B cell (primary cell): ENCODE measurements at regions of chr6 and their contacts with region 1.

Region 1: GRCh38 chr6:13487122-13488014 is at the start of gene GFOD1:
- DNase-seq: peak; percentile 89
- ATAC-seq: peak; percentile 81
- H3K4me3 ChIP-seq: peak within 1 kb of the TSS; percentile 51 to 73 (median 66)
- H3K4me3 Mint-ChIP-seq: peak within 1 kb of the TSS; percentile 95
- H3K27ac ChIP-seq: peak within 1 kb of the TSS; percentile 57 to 60
- H3K27ac Mint-ChIP-seq: peak within 1 kb of the TSS; percentile 97
- H3K4me1 ChIP-seq: peaks cover 19 to 38% of the 10 kb centered on the region in 2 donors
- H3K4me1 Mint-ChIP-seq: peaks cover 42% of the 10 kb centered on the region
- H3K27me3 ChIP-seq: no peaks in the 10 kb centered on the region
- H3K27me3 Mint-ChIP-seq: no peaks in the 10 kb centered on the region
- CTCF ChIP-seq: no peak
- total RNA-seq, gene GFOD1: 42.4 and 44.6 TPM in 2 replicates

Region 2: GRCh38 chr6:11537229-11538051 is 1949.9 kb before region 1 on chr6 and contains the start of gene TMEM170B:
- CTCF ChIA-PET with region 1: no interaction called
- POLR2A ChIA-PET with region 1: no interaction called
- intact Hi-C with region 1: loop called (anchors 5 kb)
- DNase-seq: peak; percentile 99
- ATAC-seq: peak; percentile 93
- H3K4me3 ChIP-seq: peak within 1 kb of the TSS; percentile 68 to 83 (median 80)
- H3K4me3 Mint-ChIP-seq: peak within 1 kb of the TSS; percentile 87
- H3K27ac ChIP-seq: peak within 1 kb of the TSS; percentile 19 to 83
- H3K27ac Mint-ChIP-seq: peak within 1 kb of the TSS; percentile 92
- H3K4me1 ChIP-seq: peaks cover 8 to 11% of the 10 kb centered on the region in 2 donors
- H3K4me1 Mint-ChIP-seq: peaks cover 16% of the 10 kb centered on the region
- H3K27me3 ChIP-seq: no peaks in the 10 kb centered on the region
- H3K27me3 Mint-ChIP-seq: peaks cover 8% of the 10 kb centered on the region
- CTCF ChIP-seq: no peak
- total RNA-seq, gene TMEM170B: 3.2 and 3.4 TPM in 2 replicates

Region 3: GRCh38 chr6:13053006-13053461 is 434.3 kb before region 1 on chr6:
- CTCF ChIA-PET with region 1: no interaction called
- POLR2A ChIA-PET with region 1: no interaction called
- intact Hi-C with region 1: no loop called
- DNase-seq: no peak
- ATAC-seq: no peak
- H3K4me3 ChIP-seq: no peak overlapping the region
- H3K4me3 Mint-ChIP-seq: no peak overlapping the region
- H3K27ac ChIP-seq: no peak overlapping the region
- H3K27ac Mint-ChIP-seq: no peak overlapping the region
- H3K4me1 ChIP-seq: no peaks in the 10 kb centered on the region
- H3K4me1 Mint-ChIP-seq: no peaks in the 10 kb centered on the region
- H3K27me3 ChIP-seq: no peaks in the 10 kb centered on the region
- H3K27me3 Mint-ChIP-seq: peaks cover 50% of the 10 kb centered on the region
- CTCF ChIP-seq: no peak

Region 4: GRCh38 chr6:13383328-13384163 is 103.8 kb before region 1 on chr6:
- CTCF ChIA-PET with region 1: interaction called, 21 read pairs
- POLR2A ChIA-PET with region 1: interaction called, 4 read pairs
- intact Hi-C with region 1: loop called (anchors 2 kb)
- DNase-seq: peak; percentile 83
- ATAC-seq: peak; percentile 96
- H3K4me3 ChIP-seq: no peak overlapping the region
- H3K4me3 Mint-ChIP-seq: peak overlapping the region; percentile 55
- H3K27ac ChIP-seq: peak overlapping the region; percentile 70 to 84
- H3K27ac Mint-ChIP-seq: peak overlapping the region; percentile 92
- H3K4me1 ChIP-seq: peaks cover 36 to 42% of the 10 kb centered on the region in 2 donors
- H3K4me1 Mint-ChIP-seq: peaks cover 73% of the 10 kb centered on the region
- H3K27me3 ChIP-seq: no peaks in the 10 kb centered on the region
- H3K27me3 Mint-ChIP-seq: no peaks in the 10 kb centered on the region
- CTCF ChIP-seq: peak; percentile 53

Region 5: GRCh38 chr6:13454286-13455221 is 32.8 kb before region 1 on chr6:
- CTCF ChIA-PET with region 1: interaction called, 9 read pairs
- POLR2A ChIA-PET with region 1: interaction called, 3 read pairs
- intact Hi-C with region 1: loop called (anchors 1 kb)
- DNase-seq: peak; percentile 75
- ATAC-seq: peak; percentile 77
- H3K4me3 ChIP-seq: peak overlapping the region in 3 of 5 experiments; percentile 7 to 26 (median 12)
- H3K4me3 Mint-ChIP-seq: peak overlapping the region; percentile 76
- H3K27ac ChIP-seq: peak overlapping the region; percentile 23 to 50
- H3K27ac Mint-ChIP-seq: peak overlapping the region; percentile 88
- H3K4me1 ChIP-seq: peaks cover 36 to 41% of the 10 kb centered on the region in 2 donors
- H3K4me1 Mint-ChIP-seq: peaks cover 56% of the 10 kb centered on the region
- H3K27me3 ChIP-seq: no peaks in the 10 kb centered on the region
- H3K27me3 Mint-ChIP-seq: no peaks in the 10 kb centered on the region
- CTCF ChIP-seq: peak; percentile 17

Region 6: GRCh38 chr6:13526727-13527670 is 39.6 kb after region 1 on chr6:
- CTCF ChIA-PET with region 1: interaction called, 7 read pairs
- POLR2A ChIA-PET with region 1: interaction called, 6 read pairs
- intact Hi-C with region 1: loop called (anchors 1 kb)
- DNase-seq: peak; percentile 86
- ATAC-seq: peak; percentile 88
- H3K4me3 ChIP-seq: peak overlapping the region in 3 of 5 experiments; percentile 0 to 33 (median 11)
- H3K4me3 Mint-ChIP-seq: peak overlapping the region; percentile 40
- H3K27ac ChIP-seq: peak overlapping the region; percentile 76 to 89
- H3K27ac Mint-ChIP-seq: peak overlapping the region; percentile 88
- H3K4me1 ChIP-seq: peaks cover 38 to 41% of the 10 kb centered on the region in 2 donors
- H3K4me1 Mint-ChIP-seq: peaks cover 47% of the 10 kb centered on the region
- H3K27me3 ChIP-seq: no peaks in the 10 kb centered on the region
- H3K27me3 Mint-ChIP-seq: no peaks in the 10 kb centered on the region
- CTCF ChIP-seq: peak; percentile 33

Region 7: DNA sequence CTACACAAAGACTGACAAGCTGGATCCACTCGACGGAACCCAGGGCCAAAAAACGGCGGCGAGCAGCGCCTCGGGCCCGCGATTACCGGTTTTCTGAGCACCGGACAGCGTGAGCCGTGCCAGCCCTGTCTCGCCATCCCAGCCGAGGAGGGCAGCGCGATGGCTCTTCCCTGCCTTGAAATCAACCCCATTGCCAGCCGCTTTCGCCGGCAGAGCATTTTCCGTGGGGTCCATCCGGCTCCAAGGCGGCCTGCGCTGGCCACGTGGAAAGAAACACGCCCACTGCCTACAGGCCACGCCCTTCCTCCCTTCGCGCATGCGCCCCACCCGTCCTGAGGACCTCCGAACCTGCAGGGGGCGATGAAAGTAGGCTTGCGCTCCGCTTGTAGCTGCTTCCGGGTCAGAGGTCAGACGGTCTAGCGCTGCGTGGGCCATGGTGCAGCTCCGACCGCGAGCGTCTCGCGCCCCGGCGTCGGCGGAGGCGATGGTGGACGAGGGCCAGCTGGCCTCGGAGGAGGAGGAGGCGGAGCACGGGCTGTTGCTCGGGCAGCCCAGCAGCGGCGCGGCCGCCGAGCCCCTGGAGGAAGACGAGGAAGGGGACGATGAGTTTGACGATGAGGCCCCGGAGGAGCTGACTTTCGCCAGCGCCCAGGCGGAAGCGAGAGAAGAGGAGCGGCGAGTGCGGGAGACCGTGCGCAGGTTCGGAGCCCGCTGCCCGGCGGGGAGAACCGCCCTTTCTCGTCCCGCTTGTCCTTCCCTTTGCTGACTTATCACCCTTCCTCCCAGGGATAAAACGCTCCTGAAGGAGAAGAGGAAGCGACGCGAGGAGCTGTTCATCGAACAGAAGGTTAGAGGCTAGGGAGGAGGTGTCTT is 127.8 kb after region 1 on chr6 and contains the start of gene NOL7:
- CTCF ChIA-PET with region 1: interaction called, 11 read pairs
- POLR2A ChIA-PET with region 1: interaction called, 6 read pairs
- intact Hi-C with region 1: loop called (anchors 1 kb)
- DNase-seq: peak; percentile 99
- ATAC-seq: peak; percentile 93
- H3K4me3 ChIP-seq: peak within 1 kb of the TSS; percentile 79 to 94 (median 93)
- H3K4me3 Mint-ChIP-seq: peak within 1 kb of the TSS; percentile 97
- H3K27ac ChIP-seq: peak within 1 kb of the TSS; percentile 73 to 82
- H3K27ac Mint-ChIP-seq: peak within 1 kb of the TSS; percentile 97
- H3K4me1 ChIP-seq: peaks cover 16 to 22% of the 10 kb centered on the region in 2 donors
- H3K4me1 Mint-ChIP-seq: peaks cover 46% of the 10 kb centered on the region
- H3K27me3 ChIP-seq: no peaks in the 10 kb centered on the region
- H3K27me3 Mint-ChIP-seq: no peaks in the 10 kb centered on the region
- CTCF ChIP-seq: peak; percentile 86
- total RNA-seq, gene NOL7: 48.6 and 58.3 TPM in 2 replicates